ENCODE measurements at regions of chr7 and their contacts with region 1.

Region 1: GRCh38 chr7:120272261-120272660 is 714 bp upstream of the KCND2 start:
- DNase-seq: peak; percentile 53
- ATAC-seq: peak; percentile 73
- H3K4me3 ChIP-seq: peak overlapping the region; percentile 64
- H3K27ac ChIP-seq: no peak overlapping the region
- H3K4me1 ChIP-seq: no peaks in the 10 kb centered on the region
- H3K27me3 ChIP-seq: peaks cover 17% of the 10 kb centered on the region
- CTCF ChIP-seq: peak; percentile 78
- POLR2A ChIP-seq: no peak
- RAD21 ChIP-seq: peak; percentile 80

Region 2: DNA sequence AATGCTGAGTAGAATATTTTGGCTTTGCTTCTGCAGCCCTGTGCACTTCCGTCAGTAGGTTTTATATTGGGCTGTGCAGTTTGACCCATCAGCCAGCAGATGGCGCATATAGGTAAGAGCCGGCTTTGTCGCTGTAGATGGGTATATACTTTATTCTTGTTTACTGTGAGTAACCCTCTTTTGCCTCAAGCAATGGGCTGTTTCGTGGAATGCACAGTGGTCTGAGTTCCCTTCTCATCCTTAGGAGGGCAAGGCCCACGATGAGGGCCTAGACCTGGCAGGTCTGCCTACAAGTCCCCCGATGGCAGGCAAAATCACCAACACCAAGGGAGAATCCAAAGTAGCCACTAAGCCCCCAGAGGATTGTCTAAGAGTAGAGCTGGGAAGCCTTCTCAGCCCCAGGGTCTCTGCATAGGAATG is 1002.2 kb before region 1 on chr7:
- CTCF ChIA-PET with region 1: interaction called, 3 read pairs
- POLR2A ChIA-PET with region 1: no interaction called
- dilution Hi-C with region 1: no loop called
- in situ Hi-C with region 1: loop called (anchors 10 kb)
- intact Hi-C with region 1: loop called (anchors 1 kb)
- DNase-seq: peak; percentile 55
- ATAC-seq: peak; percentile 95
- H3K4me3 ChIP-seq: no peak overlapping the region
- H3K27ac ChIP-seq: no peak overlapping the region
- H3K4me1 ChIP-seq: no peaks in the 10 kb centered on the region
- H3K27me3 ChIP-seq: no peaks in the 10 kb centered on the region
- CTCF ChIP-seq: peak; percentile 78
- POLR2A ChIP-seq: no peak
- RAD21 ChIP-seq: peak; percentile 66

Region 3: GRCh38 chr7:119685906-119686305 is 586.4 kb before region 1 on chr7:
- CTCF ChIA-PET with region 1: no interaction called
- POLR2A ChIA-PET with region 1: no interaction called
- dilution Hi-C with region 1: no loop called
- in situ Hi-C with region 1: no loop called
- intact Hi-C with region 1: loop called (anchors 10 kb)
- DNase-seq: no peak
- ATAC-seq: no peak
- H3K4me3 ChIP-seq: no peak overlapping the region
- H3K27ac ChIP-seq: no peak overlapping the region
- H3K4me1 ChIP-seq: no peaks in the 10 kb centered on the region
- H3K27me3 ChIP-seq: no peaks in the 10 kb centered on the region
- CTCF ChIP-seq: no peak
- POLR2A ChIP-seq: no peak
- RAD21 ChIP-seq: no peak

Region 4: DNA sequence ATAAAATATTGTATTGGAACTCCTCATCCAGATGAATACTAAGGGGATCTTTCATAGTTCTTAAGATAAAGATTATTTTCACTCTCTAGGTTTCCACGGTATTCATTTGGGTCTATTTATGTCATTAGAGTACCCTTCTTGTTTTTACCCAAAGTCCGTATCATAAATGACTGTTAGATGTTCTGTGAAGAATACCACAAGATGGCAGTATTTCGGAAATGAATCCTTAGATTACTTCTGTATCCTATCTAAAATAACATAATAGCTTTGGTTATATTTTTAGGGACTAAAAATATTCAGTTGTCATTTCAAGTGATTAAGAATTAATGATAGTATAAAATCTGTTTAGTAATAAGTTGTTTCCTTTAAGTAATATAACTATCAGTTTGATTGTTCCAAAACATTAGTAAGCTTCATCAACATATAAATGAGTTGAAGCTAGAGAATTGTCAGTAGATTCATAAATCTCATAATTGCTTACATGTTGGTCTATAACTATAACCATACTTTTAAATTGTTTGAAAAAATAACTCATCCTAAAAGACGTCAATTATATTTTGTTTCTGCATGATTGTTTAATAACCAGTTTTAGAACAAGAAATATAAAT is 336.7 kb before region 1 on chr7:
- CTCF ChIA-PET with region 1: interaction called, 7 read pairs
- POLR2A ChIA-PET with region 1: no interaction called
- dilution Hi-C with region 1: no loop called
- in situ Hi-C with region 1: loop called (anchors 5 kb)
- intact Hi-C with region 1: loop called (anchors 1 kb)
- DNase-seq: peak; percentile 62
- ATAC-seq: peak; percentile 77
- H3K4me3 ChIP-seq: no peak overlapping the region
- H3K27ac ChIP-seq: no peak overlapping the region
- H3K4me1 ChIP-seq: no peaks in the 10 kb centered on the region
- H3K27me3 ChIP-seq: no peaks in the 10 kb centered on the region
- CTCF ChIP-seq: peak; percentile 63
- POLR2A ChIP-seq: no peak
- RAD21 ChIP-seq: peak; percentile 63

Region 5: GRCh38 chr7:120052884-120053382 is 219.3 kb before region 1 on chr7:
- CTCF ChIA-PET with region 1: no interaction called
- POLR2A ChIA-PET with region 1: no interaction called
- dilution Hi-C with region 1: no loop called
- in situ Hi-C with region 1: no loop called
- intact Hi-C with region 1: loop called (anchors 2 kb)
- DNase-seq: peak; percentile 99
- ATAC-seq: peak; percentile 89
- H3K4me3 ChIP-seq: no peak overlapping the region
- H3K27ac ChIP-seq: peak overlapping the region; percentile 99
- H3K4me1 ChIP-seq: peaks cover 23% of the 10 kb centered on the region
- H3K27me3 ChIP-seq: no peaks in the 10 kb centered on the region
- CTCF ChIP-seq: no peak
- POLR2A ChIP-seq: no peak; the same call in 1 of the 2 replicates
- RAD21 ChIP-seq: no peak

Region 6: DNA sequence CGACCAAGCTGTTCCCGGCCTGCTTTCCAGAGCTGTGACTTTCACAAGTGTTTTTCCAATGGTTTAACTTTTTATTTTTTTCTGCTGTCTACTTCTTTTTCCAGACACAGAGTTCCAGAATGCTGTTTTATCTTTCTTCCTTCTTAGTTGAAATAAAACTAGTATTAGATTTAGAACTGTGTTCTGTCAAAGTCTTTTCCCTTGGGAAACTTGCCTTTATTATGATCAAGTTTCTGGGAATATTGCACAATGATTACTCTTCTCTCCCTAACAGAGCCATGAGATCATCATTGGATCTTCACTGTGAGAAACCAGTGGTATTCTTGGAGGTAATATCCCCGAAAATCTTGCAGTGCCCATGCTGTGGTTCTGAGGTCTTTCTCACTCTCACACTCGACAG is 104.2 kb before region 1 on chr7:
- CTCF ChIA-PET with region 1: no interaction called
- POLR2A ChIA-PET with region 1: no interaction called
- dilution Hi-C with region 1: no loop called
- in situ Hi-C with region 1: no loop called
- intact Hi-C with region 1: no loop called
- DNase-seq: peak; percentile 62
- ATAC-seq: peak; percentile 64
- H3K4me3 ChIP-seq: no peak overlapping the region
- H3K27ac ChIP-seq: peak overlapping the region; percentile 82; the same call in 1 of the 2 replicates
- H3K4me1 ChIP-seq: no peaks in the 10 kb centered on the region
- H3K27me3 ChIP-seq: no peaks in the 10 kb centered on the region
- CTCF ChIP-seq: no peak
- POLR2A ChIP-seq: no peak
- RAD21 ChIP-seq: no peak

Region 7: DNA sequence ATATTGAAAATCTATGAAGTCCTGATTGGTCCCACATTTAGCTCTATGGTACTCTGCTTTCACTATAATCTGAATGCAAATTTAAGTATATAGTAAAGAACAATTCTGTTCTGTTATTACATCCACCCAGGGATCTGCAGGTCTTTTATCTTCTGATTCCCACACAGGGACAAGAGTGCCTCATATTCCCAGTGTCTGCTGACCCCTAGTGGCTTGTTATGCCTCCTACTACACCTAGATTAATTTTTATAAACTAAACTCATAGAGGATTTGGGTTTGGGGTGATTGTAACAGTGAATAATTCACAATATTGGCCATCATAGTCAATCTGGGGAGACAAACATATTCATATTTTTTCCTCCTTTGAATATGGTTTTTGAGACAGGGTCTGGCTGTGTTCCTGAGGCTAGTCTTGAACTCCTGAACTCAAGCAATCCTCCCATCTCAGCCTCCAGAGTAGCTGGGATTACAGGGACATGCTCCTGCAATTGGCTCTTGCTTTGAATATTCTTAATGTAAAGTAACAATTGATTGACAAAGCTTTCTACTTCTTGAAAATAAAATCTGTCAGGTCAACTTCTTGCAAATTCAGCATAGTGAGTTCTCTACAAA is 282.8 kb after region 1 on chr7:
- CTCF ChIA-PET with region 1: no interaction called
- POLR2A ChIA-PET with region 1: no interaction called
- dilution Hi-C with region 1: no loop called
- in situ Hi-C with region 1: no loop called
- intact Hi-C with region 1: loop called (anchors 2 kb)
- DNase-seq: peak; percentile 47
- ATAC-seq: peak; percentile 86
- H3K4me3 ChIP-seq: no peak overlapping the region
- H3K27ac ChIP-seq: no peak overlapping the region
- H3K4me1 ChIP-seq: no peaks in the 10 kb centered on the region
- H3K27me3 ChIP-seq: no peaks in the 10 kb centered on the region; the same call in 1 of the 2 replicates
- CTCF ChIP-seq: peak; percentile 71
- POLR2A ChIP-seq: no peak
- RAD21 ChIP-seq: peak; percentile 75

Region 8: DNA sequence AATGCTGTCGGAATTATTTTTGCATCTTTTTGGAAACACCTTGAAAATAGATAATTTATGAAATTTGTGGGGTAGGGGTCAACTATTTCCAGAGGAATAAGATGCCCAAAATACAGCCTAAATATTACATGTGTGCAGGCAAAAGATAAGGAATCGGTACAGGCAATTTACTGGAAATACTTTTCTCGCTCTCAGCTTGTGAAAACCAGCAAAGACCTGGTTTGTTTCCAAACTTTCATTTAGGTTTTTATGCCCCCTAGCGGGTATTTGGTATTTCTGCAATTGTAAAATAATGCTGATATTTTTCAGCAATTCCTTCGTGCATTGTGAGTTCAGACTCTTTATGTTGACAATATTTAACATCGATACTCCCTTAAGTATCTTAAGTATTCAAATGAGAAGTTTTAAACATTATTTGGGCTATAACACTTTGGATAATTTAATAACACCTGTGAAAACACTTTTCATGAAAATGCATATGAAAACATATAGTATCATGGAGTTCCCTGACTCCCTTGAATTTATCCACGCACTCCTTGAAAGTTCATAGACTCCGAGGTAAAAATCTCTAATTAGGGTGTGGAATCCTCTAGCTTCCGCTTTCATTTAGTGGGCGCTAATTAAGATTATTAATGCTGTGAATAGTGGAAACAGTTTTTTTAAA is 453.2 kb after region 1 on chr7:
- CTCF ChIA-PET with region 1: no interaction called
- POLR2A ChIA-PET with region 1: no interaction called
- dilution Hi-C with region 1: no loop called
- in situ Hi-C with region 1: no loop called
- intact Hi-C with region 1: loop called (anchors 10 kb)
- DNase-seq: peak; percentile 45
- ATAC-seq: no peak
- H3K4me3 ChIP-seq: no peak overlapping the region
- H3K27ac ChIP-seq: no peak overlapping the region
- H3K4me1 ChIP-seq: peaks cover 2% of the 10 kb centered on the region
- H3K27me3 ChIP-seq: peaks cover 4% of the 10 kb centered on the region
- CTCF ChIP-seq: peak; percentile 61
- POLR2A ChIP-seq: no peak
- RAD21 ChIP-seq: peak; percentile 44

Region 9: GRCh38 chr7:120979765-120980499 is 707.7 kb after region 1 on chr7:
- CTCF ChIA-PET with region 1: no interaction called
- POLR2A ChIA-PET with region 1: no interaction called
- dilution Hi-C with region 1: no loop called
- in situ Hi-C with region 1: no loop called
- intact Hi-C with region 1: no loop called
- DNase-seq: peak; percentile 29
- ATAC-seq: peak; percentile 74
- H3K4me3 ChIP-seq: no peak overlapping the region
- H3K27ac ChIP-seq: no peak overlapping the region
- H3K4me1 ChIP-seq: peaks cover 5% of the 10 kb centered on the region
- H3K27me3 ChIP-seq: no peaks in the 10 kb centered on the region
- CTCF ChIP-seq: no peak
- POLR2A ChIP-seq: no peak
- RAD21 ChIP-seq: no peak

Region 10: GRCh38 chr7:121000081-121000983 is 728.1 kb after region 1 on chr7:
- CTCF ChIA-PET with region 1: no interaction called
- POLR2A ChIA-PET with region 1: no interaction called
- dilution Hi-C with region 1: no loop called
- in situ Hi-C with region 1: no loop called
- intact Hi-C with region 1: no loop called
- DNase-seq: peak; percentile 73
- ATAC-seq: peak; percentile 56; the same call in 1 of the 2 replicates
- H3K4me3 ChIP-seq: peak overlapping the region; percentile 3; the same call in 1 of the 2 replicates
- H3K27ac ChIP-seq: peak overlapping the region; percentile 40; the same call in 1 of the 2 replicates
- H3K4me1 ChIP-seq: peaks cover 16% of the 10 kb centered on the region
- H3K27me3 ChIP-seq: no peaks in the 10 kb centered on the region
- CTCF ChIP-seq: no peak
- POLR2A ChIP-seq: no peak
- RAD21 ChIP-seq: no peak

Measured in IMR-90 (cell line).